Mammary epithelial cell (primary cell): ENCODE measurements at regions of chr14 and their contacts with region 1.

Region 1: DNA sequence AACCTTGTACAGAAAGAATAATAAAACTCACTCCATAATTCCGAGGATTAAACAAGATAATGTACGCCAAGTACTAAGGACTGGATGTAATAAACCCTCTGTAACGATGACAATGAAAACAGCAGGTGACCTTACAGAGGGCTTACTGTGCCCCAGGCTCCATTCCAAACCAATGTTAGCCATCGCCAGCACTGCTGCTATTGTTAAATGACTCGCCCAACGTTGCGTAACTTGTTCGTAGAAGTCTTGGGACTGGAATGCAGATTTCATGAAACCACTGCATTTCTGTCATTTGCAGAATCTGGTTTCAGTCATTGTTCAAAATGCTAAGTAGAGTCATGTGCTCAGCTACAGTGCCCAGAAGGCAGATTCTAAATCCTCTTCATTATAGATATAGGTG is 728 bp upstream of the STON2 start:
- DNase-seq: peak; percentile 97
- H3K4me3 ChIP-seq: peak overlapping the region in 1 of 3 experiments; percentile 11
- H3K27ac ChIP-seq: peak overlapping the region; percentile 100
- H3K4me1 ChIP-seq: peaks cover 49% of the 10 kb centered on the region
- H3K27me3 ChIP-seq: no peaks in the 10 kb centered on the region
- CTCF ChIP-seq: no peak

Region 2: DNA sequence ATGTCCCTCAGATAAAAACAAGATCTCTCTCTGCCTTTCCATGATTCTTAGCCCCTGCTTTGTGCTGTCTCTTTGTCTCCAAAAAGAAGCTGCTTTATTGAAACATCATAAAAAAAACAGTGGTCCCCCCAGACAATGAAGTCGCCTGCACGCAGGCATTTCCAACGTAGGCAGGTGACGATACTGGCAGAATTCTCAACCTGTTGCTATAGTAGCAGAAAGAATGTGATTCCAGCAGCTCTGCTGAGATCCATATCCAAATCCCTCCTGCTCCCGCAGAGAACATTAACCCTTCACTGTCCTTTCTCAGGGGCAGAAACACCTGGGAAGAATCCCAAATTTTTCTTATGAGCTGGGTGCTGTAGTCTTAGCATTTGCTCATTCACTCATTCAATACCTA is 85.5 kb before region 1 on chr14:
- CTCF ChIA-PET with region 1: interaction called, 3 read pairs
- dilution Hi-C with region 1: no loop called
- in situ Hi-C with region 1: loop called in 1 of 2 experiments (anchors 5 kb)
- intact Hi-C with region 1: loop called (anchors 1 kb)
- DNase-seq: no peak
- H3K4me3 ChIP-seq: no peak overlapping the region
- H3K27ac ChIP-seq: peak overlapping the region; percentile 88
- H3K4me1 ChIP-seq: peaks cover 58% of the 10 kb centered on the region
- H3K27me3 ChIP-seq: no peaks in the 10 kb centered on the region
- CTCF ChIP-seq: no peak

Region 3: DNA sequence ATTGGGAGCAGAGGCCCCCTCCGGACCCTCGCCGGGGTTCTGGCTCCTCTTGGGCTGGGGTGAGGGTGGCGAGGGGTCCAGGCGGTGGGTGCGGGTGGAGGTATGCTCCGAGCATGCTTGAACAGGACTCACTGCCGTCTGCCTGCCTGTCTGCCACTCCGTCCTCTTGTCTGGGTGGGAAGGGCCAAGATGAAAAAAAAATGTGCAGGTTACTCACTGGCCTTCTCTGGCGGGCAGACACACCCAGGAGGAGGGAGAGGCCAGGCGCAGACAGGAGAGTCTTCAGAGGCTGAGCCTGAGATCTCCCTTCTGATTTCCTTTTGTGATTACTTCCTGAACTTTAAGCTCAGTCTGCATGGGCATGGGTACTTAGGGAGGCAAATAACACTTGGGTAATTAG is 76.8 kb before region 1 on chr14:
- CTCF ChIA-PET with region 1: no interaction called
- dilution Hi-C with region 1: no loop called
- in situ Hi-C with region 1: no loop called
- intact Hi-C with region 1: loop called (anchors 1 kb)
- DNase-seq: peak; percentile 90
- H3K4me3 ChIP-seq: peak overlapping the region; percentile 70 to 88 (median 81)
- H3K27ac ChIP-seq: peak overlapping the region; percentile 93
- H3K4me1 ChIP-seq: peaks cover 60% of the 10 kb centered on the region
- H3K27me3 ChIP-seq: no peaks in the 10 kb centered on the region
- CTCF ChIP-seq: no peak

Region 4: DNA sequence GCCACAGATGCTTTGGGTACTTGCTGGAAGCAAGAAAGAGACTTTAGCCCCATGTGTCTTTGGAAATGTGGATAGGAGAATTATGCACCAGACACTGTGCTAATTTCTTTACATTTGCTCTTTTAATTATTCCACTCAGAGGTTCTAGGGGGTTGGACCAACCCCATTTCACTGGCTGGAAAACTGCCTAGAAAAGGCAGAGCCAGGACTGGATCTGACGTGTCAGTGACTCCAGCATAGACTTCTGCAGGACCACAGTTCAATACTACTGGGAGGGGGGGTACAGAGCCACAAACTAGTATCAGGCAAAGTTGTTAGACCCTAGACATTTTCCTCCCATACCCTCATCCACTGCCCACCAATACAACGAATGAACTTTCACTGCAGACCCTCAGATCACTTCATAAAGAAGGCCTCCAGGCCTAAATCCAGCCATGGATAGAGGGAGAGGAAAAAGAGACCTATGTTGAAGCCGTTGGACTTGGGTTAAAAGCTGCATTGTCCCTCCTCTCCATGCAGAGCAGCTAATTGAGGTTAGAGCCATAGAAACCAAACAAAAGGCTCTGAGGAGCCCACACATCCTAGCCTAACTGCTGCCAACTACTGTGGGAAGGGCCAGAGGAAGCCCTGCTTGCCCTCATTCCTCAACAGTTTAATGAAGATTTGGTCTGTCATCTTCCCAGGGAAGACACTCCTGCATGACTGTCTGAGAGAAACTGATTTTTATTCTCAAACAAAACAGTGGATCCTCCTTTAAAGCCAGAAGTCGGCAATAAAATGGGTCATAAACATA is 69.4 kb before region 1 on chr14:
- CTCF ChIA-PET with region 1: no interaction called
- dilution Hi-C with region 1: no loop called
- in situ Hi-C with region 1: no loop called
- intact Hi-C with region 1: loop called (anchors 1 kb)
- DNase-seq: peak; percentile 29
- H3K4me3 ChIP-seq: no peak overlapping the region
- H3K27ac ChIP-seq: peak overlapping the region; percentile 97
- H3K4me1 ChIP-seq: peaks cover 44% of the 10 kb centered on the region
- H3K27me3 ChIP-seq: no peaks in the 10 kb centered on the region
- CTCF ChIP-seq: no peak

Region 5: DNA sequence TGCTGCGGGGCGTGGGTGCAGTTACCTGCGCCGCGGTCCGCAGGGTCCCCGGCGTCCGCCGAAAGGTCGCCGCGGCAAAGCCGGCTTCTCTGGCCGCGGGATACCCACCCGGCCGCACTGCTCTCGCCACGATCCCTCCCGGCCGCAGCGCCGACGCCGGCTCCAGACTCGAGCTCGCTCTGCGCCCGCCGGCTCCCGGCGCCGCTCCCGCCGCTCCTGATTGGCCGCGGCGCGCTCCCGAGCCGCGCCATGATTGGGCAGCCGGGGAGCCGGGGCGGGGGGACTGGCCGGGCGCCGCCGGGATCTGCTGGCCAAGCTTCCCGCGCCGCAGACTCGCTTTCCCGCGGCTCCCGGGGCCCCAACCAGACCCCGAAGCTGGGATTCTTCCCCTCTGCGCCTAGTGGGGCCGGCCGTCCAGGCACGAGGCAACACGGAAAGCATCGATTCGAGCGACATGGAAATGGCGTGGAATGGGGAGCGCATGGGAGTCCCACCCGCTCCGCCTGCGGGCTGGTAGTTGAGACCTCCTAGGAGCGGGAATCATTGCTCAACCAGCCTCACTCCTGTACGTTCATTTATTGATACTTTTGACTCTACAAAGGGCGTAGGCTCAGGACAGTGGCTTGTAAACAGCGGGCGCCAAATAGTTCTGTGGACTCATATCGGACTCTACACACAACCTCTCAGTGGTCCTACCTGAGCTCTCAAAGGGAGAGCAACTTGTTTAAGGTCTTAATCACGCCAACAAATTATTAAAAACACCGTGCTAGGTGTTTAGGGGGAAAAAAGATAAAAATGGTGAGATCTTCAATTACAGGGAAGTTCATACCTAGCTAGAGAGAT is 35.7 kb after region 1 on chr14:
- CTCF ChIA-PET with region 1: no interaction called
- dilution Hi-C with region 1: no loop called
- in situ Hi-C with region 1: loop called in 1 of 2 experiments (anchors 10 kb)
- intact Hi-C with region 1: loop called (anchors 1 kb)
- DNase-seq: peak; percentile 84
- H3K4me3 ChIP-seq: peak overlapping the region; percentile 46 to 78 (median 69)
- H3K27ac ChIP-seq: peak overlapping the region; percentile 25
- H3K4me1 ChIP-seq: peaks cover 41% of the 10 kb centered on the region
- H3K27me3 ChIP-seq: no peaks in the 10 kb centered on the region
- CTCF ChIP-seq: no peak

Region 6: DNA sequence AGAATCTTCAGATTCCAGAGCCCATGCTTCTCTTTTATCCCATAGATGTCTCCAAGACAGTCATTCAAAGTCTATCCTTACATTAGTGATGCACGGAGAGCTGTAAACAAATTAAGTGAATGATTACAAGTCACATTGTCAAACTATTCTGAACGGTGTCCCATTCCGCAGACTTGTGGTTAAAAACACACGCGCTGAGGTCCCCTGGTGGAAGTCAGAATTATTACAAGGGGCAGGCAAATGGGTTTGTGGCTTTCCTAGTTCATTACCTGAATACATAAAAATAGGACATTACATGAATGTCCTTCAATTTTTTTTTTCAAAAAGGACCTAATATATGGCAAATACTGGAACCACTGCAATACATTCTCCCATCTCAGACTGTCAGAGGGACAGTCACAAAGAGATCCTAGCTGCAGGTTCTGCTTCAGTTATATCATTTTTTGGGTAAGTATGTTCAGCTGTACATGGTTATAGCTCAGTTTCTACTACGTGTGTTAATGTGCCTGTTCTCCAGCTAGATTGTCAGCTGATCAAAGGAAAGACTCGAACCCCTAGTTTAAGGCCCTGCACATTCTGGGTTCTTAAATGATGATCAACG is 52.4 kb after region 1 on chr14:
- CTCF ChIA-PET with region 1: no interaction called
- dilution Hi-C with region 1: no loop called
- in situ Hi-C with region 1: loop called in 1 of 2 experiments (anchors 10 kb)
- intact Hi-C with region 1: no loop called
- DNase-seq: peak; percentile 48
- H3K4me3 ChIP-seq: no peak overlapping the region
- H3K27ac ChIP-seq: no peak overlapping the region
- H3K4me1 ChIP-seq: peaks cover 6% of the 10 kb centered on the region
- H3K27me3 ChIP-seq: no peaks in the 10 kb centered on the region
- CTCF ChIP-seq: peak; percentile 87 to 93

Region 7: GRCh38 chr14:81784084-81784483 is 383.2 kb after region 1 on chr14:
- CTCF ChIA-PET with region 1: no interaction called
- dilution Hi-C with region 1: no loop called
- in situ Hi-C with region 1: no loop called
- intact Hi-C with region 1: no loop called
- DNase-seq: no peak
- H3K4me3 ChIP-seq: no peak overlapping the region
- H3K27ac ChIP-seq: no peak overlapping the region
- H3K4me1 ChIP-seq: no peaks in the 10 kb centered on the region
- H3K27me3 ChIP-seq: no peaks in the 10 kb centered on the region
- CTCF ChIP-seq: no peak

Region 8: DNA sequence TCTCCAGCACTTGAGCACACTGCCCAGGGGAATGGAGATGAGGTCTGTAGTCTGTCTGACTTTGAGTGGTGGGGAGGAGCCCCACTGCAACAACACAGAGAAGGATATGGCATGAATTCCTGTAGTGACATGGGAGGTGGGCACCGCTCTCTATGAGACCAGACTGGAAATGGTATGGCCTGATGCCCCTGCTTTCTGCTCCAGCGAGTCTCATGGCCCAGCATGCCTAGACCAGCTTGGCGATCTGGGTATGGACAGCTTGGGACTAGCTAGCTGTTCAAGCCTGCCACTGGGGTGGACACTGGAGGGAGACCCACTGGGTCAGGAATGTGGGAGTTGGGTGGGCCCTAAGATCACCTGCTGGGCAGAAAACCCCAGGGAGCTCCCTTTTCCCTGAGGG is 610.6 kb after region 1 on chr14:
- CTCF ChIA-PET with region 1: no interaction called
- dilution Hi-C with region 1: no loop called
- in situ Hi-C with region 1: no loop called
- intact Hi-C with region 1: no loop called
- DNase-seq: no peak
- H3K4me3 ChIP-seq: no peak overlapping the region
- H3K27ac ChIP-seq: no peak overlapping the region
- H3K4me1 ChIP-seq: no peaks in the 10 kb centered on the region
- H3K27me3 ChIP-seq: no peaks in the 10 kb centered on the region
- CTCF ChIP-seq: no peak